Left ventricle myocardium inferior (tissue), 1 donor: ENCODE measurements at regions of chr1 and their contacts with region 1.

Region 1: GRCh38 chr1:94801919-94802546 is 18.1 kb upstream of the SLC44A3 start:
- DNase-seq: no peak
- H3K4me3 ChIP-seq: peak overlapping the region; percentile 52
- H3K27ac ChIP-seq: peak overlapping the region; percentile 87
- H3K4me1 ChIP-seq: peaks cover 63% of the 10 kb centered on the region
- H3K27me3 ChIP-seq: no peaks in the 10 kb centered on the region
- CTCF ChIP-seq: peak; percentile 61

Region 2: DNA sequence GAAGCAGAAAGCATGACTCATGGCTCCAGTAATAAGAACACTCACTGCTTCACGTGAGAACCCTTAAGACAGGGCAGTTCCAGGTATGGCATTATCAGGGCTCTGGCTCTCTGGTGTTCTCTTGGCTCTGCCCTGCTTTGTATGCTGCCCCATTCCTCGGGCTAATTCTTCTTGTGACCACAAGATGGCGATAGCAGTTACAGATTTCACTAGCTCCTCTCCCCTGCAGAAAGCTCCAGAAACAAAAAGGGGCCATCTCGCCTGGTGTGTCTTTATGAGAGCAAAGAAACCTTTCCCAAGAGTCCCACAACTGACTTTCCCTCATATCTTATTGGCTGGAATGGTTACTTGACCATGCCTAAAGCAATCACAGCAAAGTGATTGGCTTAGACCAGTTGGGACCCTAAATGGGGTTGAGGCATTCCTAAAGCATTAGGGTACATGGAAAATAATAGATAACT is 320.5 kb before region 1 on chr1:
- intact Hi-C with region 1: loop called (anchors 10 kb)
- DNase-seq: no peak
- H3K4me3 ChIP-seq: no peak overlapping the region
- H3K27ac ChIP-seq: no peak overlapping the region
- H3K4me1 ChIP-seq: peaks cover 8% of the 10 kb centered on the region
- H3K27me3 ChIP-seq: no peaks in the 10 kb centered on the region
- CTCF ChIP-seq: peak; percentile 87

Region 3: GRCh38 chr1:94522304-94522703 is 279.7 kb before region 1 on chr1:
- intact Hi-C with region 1: loop called (anchors 5 kb)
- DNase-seq: no peak
- H3K4me3 ChIP-seq: no peak overlapping the region
- H3K27ac ChIP-seq: no peak overlapping the region
- H3K4me1 ChIP-seq: peaks cover 3% of the 10 kb centered on the region
- H3K27me3 ChIP-seq: no peaks in the 10 kb centered on the region
- CTCF ChIP-seq: peak; percentile 62

Region 4: GRCh38 chr1:95086949-95087533 is 285.0 kb after region 1 on chr1:
- intact Hi-C with region 1: no loop called
- DNase-seq: no peak
- H3K4me3 ChIP-seq: no peak overlapping the region
- H3K27ac ChIP-seq: peak overlapping the region; percentile 84
- H3K4me1 ChIP-seq: peaks cover 23% of the 10 kb centered on the region
- H3K27me3 ChIP-seq: no peaks in the 10 kb centered on the region
- CTCF ChIP-seq: no peak